Dorsolateral prefrontal cortex (tissue), 120 donors: ENCODE measurements at regions of chr18 and their contacts with region 1.

Region 1: DNA sequence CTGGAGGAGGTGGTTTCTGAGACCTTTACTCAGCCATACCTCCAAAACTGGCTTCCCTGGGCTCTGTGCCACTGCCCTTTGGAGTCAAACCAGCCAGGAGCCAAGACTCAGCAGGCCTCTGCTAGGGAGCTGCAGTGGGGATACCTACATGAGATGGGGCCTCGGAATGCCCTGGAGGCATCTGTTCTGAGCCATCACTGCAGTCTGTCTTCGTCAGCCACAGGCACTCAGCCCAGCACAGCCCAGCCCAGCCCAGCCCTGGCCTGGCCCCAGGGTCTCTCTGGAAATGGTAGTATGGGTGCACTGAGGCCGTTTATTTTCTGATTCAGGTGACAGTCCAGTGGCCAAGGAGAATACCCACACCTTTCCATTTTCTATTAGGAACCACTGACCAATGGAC is 209.8 kb downstream of the CELF4 start:
- DNase-seq: no peak
- H3K4me3 ChIP-seq: no peak overlapping the region
- H3K27ac ChIP-seq: no peak overlapping the region
- H3K27me3 ChIP-seq: peaks cover 0 to 6% (median 0%) of the 10 kb centered on the region in 45 donors
- CTCF ChIP-seq: no peak

Region 2: GRCh38 chr18:37419272-37419671 is 63.5 kb after region 1 on chr18:
- intact Hi-C with region 1: loop called in 1 of 2 experiments (anchors 10 kb)
- DNase-seq: no peak
- H3K4me3 ChIP-seq: no peak overlapping the region
- H3K27ac ChIP-seq: no peak overlapping the region
- H3K27me3 ChIP-seq: no peaks in the 10 kb centered on the region
- CTCF ChIP-seq: no peak